ENCODE measurements at regions of chr22 and their contacts with region 1.

Region 1: DNA sequence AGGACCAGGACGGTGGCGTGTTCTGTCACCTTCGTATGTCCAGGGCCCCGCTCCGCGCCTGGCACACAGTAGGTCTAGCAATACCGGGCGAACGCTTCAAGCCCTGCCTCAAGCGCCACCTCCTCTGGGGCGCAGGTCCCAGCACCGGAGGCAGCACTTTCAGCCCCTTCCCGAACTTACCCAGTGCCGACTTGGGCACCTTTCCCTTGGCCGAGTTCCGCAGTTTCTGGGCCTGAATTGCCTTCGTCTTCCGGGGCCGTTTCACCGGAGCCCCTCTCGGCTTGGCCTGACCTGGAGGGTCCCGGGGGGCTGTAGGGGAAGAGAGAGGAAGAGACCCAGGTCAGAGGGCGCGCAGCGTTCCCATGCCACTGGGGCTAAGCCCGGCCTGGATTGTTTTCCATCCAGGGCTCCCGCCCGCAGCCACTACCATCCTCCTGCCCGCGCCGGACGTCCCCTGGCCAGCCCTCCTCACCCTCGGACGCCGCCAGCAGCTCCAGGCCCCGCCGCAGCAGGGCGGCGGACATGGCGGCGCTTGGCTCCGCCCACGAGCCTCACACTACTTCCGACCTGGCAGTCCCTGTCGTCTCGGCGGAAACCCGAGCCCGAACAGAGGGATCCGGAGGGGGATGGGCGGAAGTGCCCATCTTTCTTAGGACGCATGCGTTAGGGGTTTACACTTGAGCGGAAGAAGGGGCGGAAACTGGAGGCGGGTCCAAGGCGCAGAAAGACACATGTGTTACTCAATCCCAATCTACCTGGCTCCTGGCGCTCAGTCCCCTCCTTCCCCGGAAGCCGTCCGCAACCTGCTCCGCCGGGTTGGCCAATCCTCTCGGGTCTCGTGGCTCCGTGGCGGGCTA is at the start of gene RPS19BP1:
- DNase-seq: peak; percentile 99 to 100 (median 100)
- H3K4me3 ChIP-seq: peak within 1 kb of the TSS; percentile 70 to 79 (median 76)
- H3K27ac ChIP-seq: peak within 1 kb of the TSS; percentile 40 to 92
- H3K4me1 ChIP-seq: peaks cover 0 to 46% (median 36%) of the 10 kb centered on the region in 3 donors
- H3K27me3 ChIP-seq: no peaks in the 10 kb centered on the region
- CTCF ChIP-seq: no peak
- total RNA-seq, gene RPS19BP1: 51.8 TPM

Region 2: DNA sequence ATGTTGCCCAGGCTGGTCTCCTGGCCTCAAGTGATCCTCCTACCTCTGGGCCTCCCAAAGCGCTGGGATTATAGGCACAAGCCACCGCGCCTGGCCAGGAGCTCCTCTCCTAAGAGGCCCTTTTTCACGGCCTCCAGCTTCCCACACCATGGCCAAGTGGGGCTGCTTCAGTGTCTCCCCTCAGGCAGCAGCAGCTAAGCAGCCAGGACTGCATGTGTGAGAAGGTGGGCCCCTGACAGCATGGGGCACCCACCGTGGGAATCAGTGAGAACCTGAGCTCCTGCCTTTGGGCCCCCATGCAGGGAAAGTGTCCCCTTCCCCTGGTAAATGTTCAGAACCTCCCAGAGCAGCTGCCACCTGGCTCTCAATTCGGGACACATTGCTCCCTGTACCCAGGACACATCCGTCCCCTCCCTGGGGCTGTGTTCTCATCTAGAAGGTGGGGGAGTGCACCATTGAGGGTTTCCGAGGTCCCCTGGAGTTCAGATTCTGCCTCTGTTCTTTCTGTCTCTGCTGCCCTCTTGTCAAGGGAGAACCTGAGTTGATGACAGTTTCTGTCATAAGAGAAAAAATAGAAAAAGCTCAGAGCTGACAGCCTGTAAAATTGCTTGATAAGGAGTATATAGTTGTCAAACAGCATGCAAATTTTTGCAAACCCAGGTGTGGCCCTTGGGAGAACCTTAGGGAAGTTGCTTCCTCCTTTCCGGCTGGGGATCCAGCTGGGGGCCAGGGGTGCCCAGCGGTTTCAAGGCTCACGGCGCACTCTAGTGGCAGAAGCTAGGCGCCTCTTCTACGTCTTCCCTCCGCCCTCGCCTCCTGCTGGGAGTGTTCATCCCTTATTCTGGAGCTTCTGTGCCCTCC is 492.0 kb after region 1 on chr22:
- intact Hi-C with region 1: loop called (anchors 10 kb)
- DNase-seq: peak; percentile 60 to 85 (median 73)
- H3K4me3 ChIP-seq: no peak overlapping the region
- H3K27ac ChIP-seq: no peak overlapping the region
- H3K4me1 ChIP-seq: peaks cover 0 to 8% (median 4%) of the 10 kb centered on the region in 3 donors
- H3K27me3 ChIP-seq: no peaks in the 10 kb centered on the region
- CTCF ChIP-seq: peak; percentile 89